PC-9 (cell line): ENCODE measurements at regions of chr16 and their contacts with region 1.

Region 1: GRCh38 chr16:352547-353403 is at the start of gene AXIN1:
- DNase-seq: peak; percentile 89 to 100
- H3K4me3 ChIP-seq: peak within 1 kb of the TSS; percentile 93
- H3K27ac ChIP-seq: no peak within 1 kb of the TSS
- H3K4me1 ChIP-seq: 0 out of 2 replicates have a peak, but pooled peaks cover 5% of the 10 kb centered on the region
- H3K27me3 ChIP-seq: no peaks in the 10 kb centered on the region
- CTCF ChIP-seq: no peak
- total RNA-seq, gene AXIN1: 42.0 and 51.2 TPM in 2 replicates

Region 2: GRCh38 chr16:96935-97381 is 255.8 kb before region 1 on chr16:
- CTCF ChIA-PET with region 1: no interaction called
- POLR2A ChIA-PET with region 1: interaction called, 10 read pairs
- intact Hi-C with region 1: no loop called
- DNase-seq: peak; percentile 72 to 91
- H3K4me3 ChIP-seq: no peak overlapping the region
- H3K27ac ChIP-seq: no peak overlapping the region
- H3K4me1 ChIP-seq: no peaks in the 10 kb centered on the region
- H3K27me3 ChIP-seq: no peaks in the 10 kb centered on the region
- CTCF ChIP-seq: peak; percentile 93

Region 3: DNA sequence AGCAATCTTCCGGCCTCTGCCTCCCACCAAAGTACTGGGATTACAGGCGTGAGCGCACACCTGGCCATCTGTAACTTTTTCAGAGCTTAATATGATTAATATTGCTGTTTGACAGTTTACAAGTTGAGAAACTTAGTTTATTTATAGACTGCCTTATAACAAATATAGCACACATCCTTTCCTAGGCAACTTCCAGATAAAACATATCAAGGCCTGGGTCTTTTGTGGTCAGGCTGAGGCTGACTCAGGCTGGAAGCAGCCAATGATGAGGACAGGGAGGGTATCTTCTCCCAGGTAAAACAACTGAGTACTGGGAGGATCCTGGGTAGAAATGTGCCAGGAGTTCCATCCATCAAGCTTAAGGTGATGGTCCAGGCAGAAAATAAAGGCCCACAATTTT is 139.8 kb before region 1 on chr16:
- CTCF ChIA-PET with region 1: interaction called, 4 read pairs
- POLR2A ChIA-PET with region 1: interaction called, 23 read pairs
- intact Hi-C with region 1: no loop called
- DNase-seq: no peak
- H3K4me3 ChIP-seq: no peak overlapping the region
- H3K27ac ChIP-seq: no peak overlapping the region
- H3K4me1 ChIP-seq: no peaks in the 10 kb centered on the region
- H3K27me3 ChIP-seq: no peaks in the 10 kb centered on the region
- CTCF ChIP-seq: no peak

Region 4: GRCh38 chr16:234468-235305 is 118.1 kb before region 1 on chr16 and contains the start of gene FAM234A:
- CTCF ChIA-PET with region 1: no interaction called
- POLR2A ChIA-PET with region 1: interaction called, 30 read pairs
- intact Hi-C with region 1: loop called (anchors 2 kb)
- DNase-seq: peak; percentile 85 to 96
- H3K4me3 ChIP-seq: peak within 1 kb of the TSS; percentile 99
- H3K27ac ChIP-seq: peak within 1 kb of the TSS; percentile 90
- H3K4me1 ChIP-seq: no peaks in the 10 kb centered on the region
- H3K27me3 ChIP-seq: no peaks in the 10 kb centered on the region
- CTCF ChIP-seq: no peak; the same call in 1 of the 2 replicates
- total RNA-seq, gene FAM234A: 126 and 131 TPM in 2 replicates

Region 5: GRCh38 chr16:336269-336668 is 16.5 kb before region 1 on chr16:
- CTCF ChIA-PET with region 1: interaction called, 24 read pairs
- POLR2A ChIA-PET with region 1: no interaction called
- intact Hi-C with region 1: no loop called
- DNase-seq: no peak
- H3K4me3 ChIP-seq: no peak overlapping the region
- H3K27ac ChIP-seq: no peak overlapping the region
- H3K4me1 ChIP-seq: peaks cover 11% of the 10 kb centered on the region
- H3K27me3 ChIP-seq: no peaks in the 10 kb centered on the region
- CTCF ChIP-seq: no peak

Region 6: GRCh38 chr16:381789-382717 is 29.3 kb after region 1 on chr16 and contains the start of gene PGAP6:
- CTCF ChIA-PET with region 1: interaction called, 13 read pairs
- POLR2A ChIA-PET with region 1: no interaction called
- intact Hi-C with region 1: no loop called
- DNase-seq: peak in 1 of 2 experiments; percentile 81
- H3K4me3 ChIP-seq: peak within 1 kb of the TSS; percentile 67
- H3K27ac ChIP-seq: no peak within 1 kb of the TSS
- H3K4me1 ChIP-seq: no peaks in the 10 kb centered on the region
- H3K27me3 ChIP-seq: no peaks in the 10 kb centered on the region
- CTCF ChIP-seq: no peak
- total RNA-seq, gene PGAP6: 41.4 and 45.6 TPM in 2 replicates